Activated naive CD4-positive, alpha-beta T cell treated with anti-CD3 and anti-CD28 coated beads for 36 hours (primary cell): ENCODE measurements at regions of chr4 and their contacts with region 1.

Region 1: GRCh38 chr4:163166041-163166579 is 580 bp downstream of the NAF1 start:
- DNase-seq: peak; percentile 56
- H3K4me3 Mint-ChIP-seq: peak overlapping the region; percentile 86
- H3K27ac Mint-ChIP-seq: peak overlapping the region; percentile 93
- H3K4me1 Mint-ChIP-seq: peaks cover 46% of the 10 kb centered on the region
- H3K27me3 Mint-ChIP-seq: no peaks in the 10 kb centered on the region

Region 2: DNA sequence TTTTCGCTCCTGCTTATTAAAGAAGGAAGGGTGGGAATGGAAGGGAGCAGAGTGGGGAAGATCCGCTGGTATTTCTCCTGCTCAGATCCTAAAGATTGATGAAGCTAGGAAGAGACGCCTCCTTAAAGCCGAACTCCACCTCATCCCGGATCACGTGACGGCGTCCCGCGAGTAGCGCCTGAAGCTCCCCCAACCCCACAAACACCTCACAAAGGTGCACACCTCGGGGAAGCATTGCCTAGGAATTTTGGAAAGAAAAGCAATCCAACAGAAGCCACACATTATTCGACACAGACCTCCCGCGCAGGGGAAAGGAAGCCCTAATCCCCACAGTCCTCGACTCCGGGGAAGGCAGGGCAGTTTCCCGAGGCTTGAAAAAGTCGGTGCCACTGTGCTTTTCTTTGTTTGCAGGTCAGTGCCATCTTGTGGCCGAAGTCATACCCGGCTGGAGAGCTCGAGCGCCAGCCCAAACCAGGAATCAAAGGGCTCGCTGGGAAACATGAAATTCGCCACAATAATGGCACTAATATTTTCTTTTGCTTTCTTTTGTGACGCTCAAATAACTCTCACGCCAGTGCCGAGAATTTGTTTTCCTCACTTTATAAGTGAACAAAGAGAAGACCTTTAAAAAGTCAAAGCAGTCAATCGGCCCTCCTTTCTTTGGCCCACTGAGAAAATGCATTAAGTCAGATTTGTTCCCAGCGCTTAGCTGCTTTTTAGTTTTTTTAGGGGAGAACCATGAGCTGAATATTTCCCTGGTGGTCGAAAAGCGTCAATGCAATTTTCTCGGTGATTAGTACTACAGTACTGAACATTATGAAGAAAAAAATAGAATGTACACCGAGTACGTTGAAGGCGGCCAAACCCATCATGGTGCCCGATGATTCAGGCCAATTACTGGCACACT is 166.6 kb after region 1 on chr4 and contains the start of gene NPY1R:
- CTCF ChIA-PET with region 1: no interaction called
- intact Hi-C with region 1: loop called (anchors 1 kb)
- DNase-seq: peak; percentile 65
- H3K4me3 Mint-ChIP-seq: peak within 1 kb of the TSS; percentile 55
- H3K27ac Mint-ChIP-seq: no peak within 1 kb of the TSS
- H3K4me1 Mint-ChIP-seq: peaks cover 14% of the 10 kb centered on the region
- H3K27me3 Mint-ChIP-seq: peaks cover 43% of the 10 kb centered on the region
- total RNA-seq, gene NPY1R: not detected

Region 3: GRCh38 chr4:163494360-163495162 is 328.5 kb after region 1 on chr4 and contains the start of gene TMA16:
- CTCF ChIA-PET with region 1: no interaction called
- intact Hi-C with region 1: loop called (anchors 1 kb)
- DNase-seq: peak; percentile 88
- H3K4me3 Mint-ChIP-seq: peak within 1 kb of the TSS; percentile 83
- H3K27ac Mint-ChIP-seq: peak within 1 kb of the TSS; percentile 99
- H3K4me1 Mint-ChIP-seq: peaks cover 26% of the 10 kb centered on the region
- H3K27me3 Mint-ChIP-seq: no peaks in the 10 kb centered on the region
- total RNA-seq, gene TMA16: 45.1 to 46.7 TPM

Region 4: DNA sequence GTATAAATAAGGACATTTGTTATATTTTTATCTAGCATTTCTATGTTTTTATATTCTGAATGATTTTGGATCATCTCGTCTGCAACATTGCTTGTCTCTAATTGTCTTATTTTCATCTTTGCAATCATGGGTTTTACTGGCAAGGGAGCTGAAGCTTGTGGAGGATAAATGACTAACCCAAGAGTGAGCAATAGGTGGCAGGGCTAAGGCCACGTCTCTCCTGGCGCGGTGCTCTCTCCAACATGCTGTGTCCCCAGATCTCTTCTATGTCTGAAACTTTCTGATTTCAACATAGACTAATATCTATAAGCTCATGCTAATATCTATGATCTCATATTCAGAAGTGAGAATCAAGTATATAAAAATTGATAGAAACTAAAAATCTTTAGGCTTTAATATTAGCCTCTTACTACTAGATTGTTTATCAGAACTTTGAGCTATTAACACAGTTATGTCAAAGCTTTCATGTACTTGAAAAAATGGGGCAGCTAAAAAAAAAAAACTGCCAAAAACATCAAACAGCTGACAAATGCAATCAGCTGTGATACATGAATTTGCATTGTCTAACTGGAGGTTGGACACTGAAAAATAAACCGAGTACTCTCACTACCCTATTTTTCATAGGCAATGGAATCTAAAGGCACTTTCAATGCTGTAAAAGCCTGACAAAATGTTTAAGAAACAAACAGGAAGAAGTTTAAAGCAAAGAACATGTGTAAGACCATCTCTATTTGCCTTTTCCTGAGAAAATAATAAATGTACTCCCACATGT is 497.5 kb after region 1 on chr4:
- CTCF ChIA-PET with region 1: no interaction called
- intact Hi-C with region 1: loop called (anchors 10 kb)
- DNase-seq: peak; percentile 8
- H3K4me3 Mint-ChIP-seq: no peak overlapping the region
- H3K27ac Mint-ChIP-seq: no peak overlapping the region
- H3K4me1 Mint-ChIP-seq: peaks cover 44% of the 10 kb centered on the region
- H3K27me3 Mint-ChIP-seq: no peaks in the 10 kb centered on the region

Region 5: GRCh38 chr4:165112368-165113139 is 1946.4 kb after region 1 on chr4 and contains the start of gene TMEM192:
- CTCF ChIA-PET with region 1: no interaction called
- intact Hi-C with region 1: loop called (anchors 1 kb)
- DNase-seq: peak; percentile 93
- H3K4me3 Mint-ChIP-seq: peak within 1 kb of the TSS; percentile 94
- H3K27ac Mint-ChIP-seq: peak within 1 kb of the TSS; percentile 74
- H3K4me1 Mint-ChIP-seq: peaks cover 13% of the 10 kb centered on the region
- H3K27me3 Mint-ChIP-seq: no peaks in the 10 kb centered on the region
- total RNA-seq, gene TMEM192: 6.3 to 8.9 TPM